Lower leg skin (tissue), 4 donors: ENCODE measurements at regions of chr4 and their contacts with region 1.

Region 1: GRCh38 chr4:120144634-120145033 is 78.0 kb upstream of the MAD2L1 start:
- DNase-seq: no peak
- H3K4me3 ChIP-seq: no peak overlapping the region
- CTCF ChIP-seq: no peak
- POLR2A ChIP-seq: no peak

Region 2: DNA sequence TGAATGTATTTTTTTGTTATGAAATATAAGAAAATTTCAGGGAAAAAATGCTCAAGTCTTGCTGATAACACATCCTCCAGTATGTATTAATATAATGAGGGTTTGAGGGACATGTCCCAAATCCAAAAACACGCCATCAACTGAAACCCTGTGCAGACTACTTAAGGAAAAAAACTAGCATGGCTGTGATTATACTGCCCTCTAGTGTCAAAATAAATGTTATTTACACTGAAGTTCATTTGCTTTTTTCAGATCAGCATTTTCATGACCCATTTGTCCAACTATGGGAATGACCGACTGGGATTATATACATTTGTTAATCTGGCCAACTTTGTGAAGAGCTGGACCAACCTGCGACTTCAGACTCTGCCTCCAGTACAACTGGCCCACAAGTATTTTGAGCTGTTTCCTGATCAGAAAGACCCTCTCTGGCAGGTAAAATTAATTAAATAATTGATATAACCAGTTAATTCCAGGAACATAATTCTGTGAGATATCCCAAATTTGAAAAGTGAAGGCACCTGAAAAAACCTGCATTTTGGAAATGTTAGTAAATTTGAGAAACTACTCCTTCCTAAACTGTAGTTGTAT is 1920.3 kb before region 1 on chr4:
- intact Hi-C with region 1: no loop called
- DNase-seq: no peak
- H3K4me3 ChIP-seq: no peak overlapping the region
- CTCF ChIP-seq: no peak
- POLR2A ChIP-seq: no peak

Region 3: DNA sequence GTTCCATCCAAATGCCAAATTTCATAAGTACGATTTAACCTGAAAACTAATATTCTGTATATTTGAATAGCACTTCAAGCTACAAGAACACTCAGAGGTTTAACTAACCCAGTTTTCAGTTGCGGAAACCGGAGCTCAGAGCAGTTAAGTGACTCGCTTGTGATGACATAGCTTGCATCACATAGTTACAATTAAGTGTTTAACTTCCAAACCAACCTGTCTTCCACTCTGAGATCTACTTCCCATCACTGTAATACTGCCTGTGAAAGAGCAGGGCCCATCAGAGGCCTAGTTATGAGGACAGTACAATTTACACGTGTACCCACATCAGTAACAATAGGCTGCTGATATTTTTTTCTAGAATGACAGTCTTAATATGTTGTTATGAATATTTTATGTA is 198.3 kb before region 1 on chr4:
- intact Hi-C with region 1: no loop called
- DNase-seq: no peak
- H3K4me3 ChIP-seq: no peak overlapping the region
- CTCF ChIP-seq: no peak
- POLR2A ChIP-seq: no peak

Region 4: GRCh38 chr4:120819805-120820437 is 675.3 kb after region 1 on chr4:
- intact Hi-C with region 1: no loop called
- DNase-seq: no peak
- H3K4me3 ChIP-seq: no peak overlapping the region
- CTCF ChIP-seq: no peak
- POLR2A ChIP-seq: no peak

Region 5: GRCh38 chr4:121266974-121267373 is 1122.3 kb after region 1 on chr4:
- intact Hi-C with region 1: loop called (anchors 10 kb)
- DNase-seq: no peak
- H3K4me3 ChIP-seq: no peak overlapping the region
- CTCF ChIP-seq: no peak
- POLR2A ChIP-seq: no peak